Activated CD4-positive, alpha-beta memory T cell treated with anti-CD3 and anti-CD28 coated beads for 36 hours (primary cell): ENCODE measurements at regions of chr10 and their contacts with region 1.

Region 1: GRCh38 chr10:102399217-102400089 is 3.9 kb downstream of the NFKB2 start:
- DNase-seq: peak; percentile 92
- H3K4me3 Mint-ChIP-seq: peak overlapping the region; percentile 68
- H3K27ac Mint-ChIP-seq: peak overlapping the region; percentile 74
- H3K4me1 Mint-ChIP-seq: peaks cover 40% of the 10 kb centered on the region
- H3K27me3 Mint-ChIP-seq: no peaks in the 10 kb centered on the region

Region 2: GRCh38 chr10:101897633-101898032 is 501.8 kb before region 1 on chr10:
- CTCF ChIA-PET with region 1: no interaction called
- POLR2A ChIA-PET with region 1: no interaction called
- intact Hi-C with region 1: no loop called
- DNase-seq: no peak
- H3K4me3 Mint-ChIP-seq: no peak overlapping the region
- H3K27ac Mint-ChIP-seq: no peak overlapping the region
- H3K4me1 Mint-ChIP-seq: peaks cover 14% of the 10 kb centered on the region
- H3K27me3 Mint-ChIP-seq: no peaks in the 10 kb centered on the region

Region 3: GRCh38 chr10:102384053-102384452 is 15.4 kb before region 1 on chr10:
- CTCF ChIA-PET with region 1: interaction called, 20 read pairs
- POLR2A ChIA-PET with region 1: interaction called, 11 read pairs
- intact Hi-C with region 1: no loop called
- DNase-seq: peak; percentile 37
- H3K4me3 Mint-ChIP-seq: no peak overlapping the region
- H3K27ac Mint-ChIP-seq: no peak overlapping the region
- H3K4me1 Mint-ChIP-seq: peaks cover 4% of the 10 kb centered on the region
- H3K27me3 Mint-ChIP-seq: no peaks in the 10 kb centered on the region

Region 4: DNA sequence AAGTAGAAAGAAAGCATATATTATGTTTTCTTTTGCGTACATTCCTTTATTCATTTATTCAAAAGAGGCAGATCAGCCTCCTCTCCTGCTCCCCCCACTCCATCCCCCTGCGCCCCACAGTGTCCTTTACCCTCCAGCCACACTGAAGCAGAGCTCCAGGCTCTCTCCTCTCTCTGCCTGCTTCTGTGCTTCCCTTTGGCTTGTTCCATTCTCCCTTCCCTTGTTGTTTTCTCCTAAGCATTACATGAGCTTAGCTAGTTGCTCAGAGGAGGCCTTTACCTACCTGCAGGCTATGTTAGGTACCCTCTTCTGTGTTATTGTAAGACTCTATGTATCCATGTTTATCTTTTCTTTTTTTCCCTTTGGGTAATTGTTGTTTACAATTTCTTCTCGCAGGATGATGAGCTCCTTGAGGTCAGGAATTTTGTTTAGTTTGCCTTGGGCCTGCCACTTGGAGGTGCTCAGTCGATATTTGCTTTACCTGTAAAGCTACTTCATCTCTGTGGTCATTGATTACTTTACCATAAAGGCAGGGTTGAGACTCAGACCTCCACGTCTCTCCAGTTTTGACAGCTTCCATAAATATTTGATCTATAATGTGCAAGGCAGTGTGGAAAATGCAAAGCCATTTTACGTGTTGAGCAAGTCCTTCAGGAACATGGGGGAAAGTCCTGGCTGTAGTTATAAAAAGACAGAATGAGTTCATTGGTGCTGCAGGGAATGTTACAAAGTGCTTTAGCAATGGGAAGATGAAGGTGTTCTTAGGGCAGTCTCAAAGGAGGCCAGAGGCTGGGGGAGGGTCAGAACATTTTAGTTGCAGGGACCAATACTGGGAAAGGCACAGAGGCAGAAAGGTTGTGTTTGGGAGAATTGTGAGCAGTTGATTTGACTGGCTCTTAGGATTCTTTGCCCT is 546.3 kb after region 1 on chr10:
- CTCF ChIA-PET with region 1: no interaction called
- POLR2A ChIA-PET with region 1: no interaction called
- intact Hi-C with region 1: no loop called
- DNase-seq: no peak
- H3K4me3 Mint-ChIP-seq: no peak overlapping the region
- H3K27ac Mint-ChIP-seq: no peak overlapping the region
- H3K4me1 Mint-ChIP-seq: no peaks in the 10 kb centered on the region
- H3K27me3 Mint-ChIP-seq: no peaks in the 10 kb centered on the region